Endothelial cell of umbilical vein (primary cell): ENCODE measurements at regions of chr3 and their contacts with region 1.

Region 1: DNA sequence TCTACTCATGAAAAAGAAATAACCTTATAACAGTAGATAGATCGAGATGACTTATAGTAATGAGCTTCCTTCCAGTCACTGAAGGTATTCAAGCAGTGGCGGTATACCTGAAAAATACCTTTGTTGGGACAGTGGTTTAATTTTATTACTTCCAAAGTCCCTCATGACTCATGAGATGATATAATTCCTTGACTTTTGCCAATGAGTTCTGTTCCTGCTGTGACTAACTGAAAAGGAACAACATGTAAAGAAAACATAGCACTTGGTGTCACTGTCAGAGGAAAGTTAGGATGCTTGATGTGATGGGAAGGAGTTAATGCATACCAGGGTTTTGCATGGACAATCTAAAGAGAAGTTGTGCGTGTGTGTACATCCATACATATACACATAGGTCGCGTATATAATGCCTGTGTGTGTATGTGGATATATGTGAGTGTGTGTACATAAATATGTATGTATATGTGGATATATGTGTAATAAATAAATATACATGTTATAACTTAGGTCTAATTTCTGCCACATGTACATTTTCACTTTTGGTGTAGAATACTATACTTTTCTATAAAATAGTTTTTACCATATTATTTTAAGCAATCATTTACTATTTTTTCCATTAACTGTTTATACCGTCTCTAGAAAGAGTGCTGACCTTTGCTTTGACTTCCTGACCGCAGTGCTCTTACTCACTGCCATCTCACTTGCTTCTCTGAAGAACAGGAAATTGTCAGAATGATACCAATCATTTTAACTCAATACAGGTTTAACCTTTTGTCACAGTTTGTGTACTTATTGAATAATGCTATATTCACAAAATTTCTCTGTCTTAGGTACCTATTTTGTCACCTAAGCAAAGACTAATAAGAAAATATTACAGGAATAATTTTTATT is 12.6 kb upstream of the PAK2 start:
- DNase-seq: peak; percentile 40
- H3K4me3 ChIP-seq: no peak overlapping the region
- H3K27ac ChIP-seq: no peak overlapping the region
- H3K4me1 ChIP-seq: peaks cover 14% of the 10 kb centered on the region
- H3K27me3 ChIP-seq: no peaks in the 10 kb centered on the region
- CTCF ChIP-seq: no peak
- POLR2A ChIP-seq: no peak

Region 2: DNA sequence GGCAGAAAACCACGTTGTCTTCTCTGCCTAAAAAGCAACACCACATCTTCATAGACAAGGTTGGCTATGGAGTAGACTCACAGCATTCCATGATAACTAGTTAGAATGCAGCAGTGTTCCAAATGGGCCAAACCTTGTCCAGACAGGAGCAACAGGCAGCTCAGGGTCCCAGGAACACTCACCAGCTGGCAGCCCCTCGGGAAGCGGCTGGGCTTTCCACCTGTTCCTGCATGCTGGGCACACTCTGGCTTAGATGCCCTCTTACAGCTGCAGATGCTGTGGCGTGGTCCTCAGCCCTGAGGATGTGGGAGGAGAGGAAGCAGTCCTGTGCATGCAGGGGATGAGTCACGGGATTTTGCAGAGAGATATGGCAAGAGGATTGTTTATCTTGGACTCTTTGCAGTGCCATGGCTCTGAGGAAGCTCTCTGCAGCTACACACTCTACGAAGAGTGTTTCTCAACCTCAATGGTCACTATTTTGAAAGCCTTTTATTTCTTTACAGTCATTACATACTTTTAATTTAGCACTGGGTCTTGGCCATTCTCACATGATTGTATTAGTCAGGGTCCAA is 76.2 kb before region 1 on chr3:
- CTCF ChIA-PET with region 1: no interaction called
- POLR2A ChIA-PET with region 1: no interaction called
- dilution Hi-C with region 1: no loop called
- intact Hi-C with region 1: no loop called
- DNase-seq: peak; percentile 98
- H3K4me3 ChIP-seq: no peak overlapping the region
- H3K27ac ChIP-seq: no peak overlapping the region
- H3K4me1 ChIP-seq: peaks cover 24% of the 10 kb centered on the region
- H3K27me3 ChIP-seq: no peaks in the 10 kb centered on the region
- CTCF ChIP-seq: no peak
- POLR2A ChIP-seq: no peak

Region 3: GRCh38 chr3:196711838-196712513 is 15.1 kb before region 1 on chr3 and contains the starts of genes CEP19 and PIGX:
- CTCF ChIA-PET with region 1: interaction called, 3 read pairs
- POLR2A ChIA-PET with region 1: no interaction called
- dilution Hi-C with region 1: no loop called
- intact Hi-C with region 1: loop called (anchors 1 kb)
- DNase-seq: peak; percentile 84
- H3K4me3 ChIP-seq: peak within 1 kb of the TSS; percentile 40 to 72 (median 67)
- H3K27ac ChIP-seq: peak within 1 kb of the TSS; percentile 36
- H3K4me1 ChIP-seq: peaks cover 7% of the 10 kb centered on the region
- H3K27me3 ChIP-seq: no peaks in the 10 kb centered on the region
- CTCF ChIP-seq: no peak
- POLR2A ChIP-seq: peak; percentile 62
- total RNA-seq, gene CEP19: 1.2 and 1.6 TPM in 2 replicates
- total RNA-seq, gene PIGX: 12.4 and 14.0 TPM in 2 replicates